CD4-positive, alpha-beta T cell (primary cell): ENCODE measurements at regions of chr2 and their contacts with region 1.

Region 1: GRCh38 chr2:134668821-134669220 is 50.0 kb downstream of the TMEM163 start:
- DNase-seq: peak; percentile 61 to 93 (median 79)
- ATAC-seq: peak; percentile 72
- H3K4me3 ChIP-seq: no peak overlapping the region
- H3K4me3 Mint-ChIP-seq: peak overlapping the region; percentile 69
- H3K27ac ChIP-seq: peak overlapping the region in 1 of 2 donors; percentile 36
- H3K27ac Mint-ChIP-seq: peak overlapping the region; percentile 85
- H3K4me1 ChIP-seq: peaks cover 62% of the 10 kb centered on the region
- H3K4me1 Mint-ChIP-seq: peaks cover 86% of the 10 kb centered on the region
- H3K27me3 ChIP-seq: no peaks in the 10 kb centered on the region
- H3K27me3 Mint-ChIP-seq: peaks cover 4% of the 10 kb centered on the region
- CTCF ChIP-seq: no peak

Region 2: DNA sequence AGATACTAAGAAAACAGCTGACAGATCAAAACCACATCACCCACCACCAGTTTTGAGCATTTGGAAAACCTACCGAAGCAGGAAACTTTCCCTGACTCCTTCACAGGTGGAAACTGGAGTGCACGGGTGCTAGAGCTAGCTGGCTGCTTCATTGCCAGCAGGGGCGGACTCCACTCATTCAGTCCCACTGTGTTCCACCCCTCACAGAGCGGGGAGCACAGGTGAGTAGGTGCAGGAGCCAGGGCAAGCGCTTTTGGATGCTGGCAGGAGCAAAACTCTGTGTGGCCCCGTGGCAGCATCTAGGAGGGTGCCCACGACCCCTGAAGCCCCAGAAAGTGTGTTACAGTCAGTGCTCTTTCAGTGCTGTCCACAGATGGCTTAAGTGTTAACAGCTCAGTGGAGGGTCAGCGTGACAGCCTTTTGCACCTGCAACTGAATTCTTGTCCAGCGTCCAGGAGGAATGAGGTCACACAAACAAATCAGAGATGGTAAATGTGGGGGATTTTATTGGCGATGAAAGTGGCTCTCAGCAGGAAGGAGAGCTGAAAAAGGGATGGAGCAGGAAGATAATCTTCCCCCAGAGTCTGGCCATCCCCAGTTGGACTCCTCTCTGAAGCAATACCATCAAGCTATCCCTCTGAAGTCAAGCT is 21.1 kb before region 1 on chr2:
- CTCF ChIA-PET with region 1: no interaction called
- POLR2A ChIA-PET with region 1: interaction called, 3 read pairs
- intact Hi-C with region 1: loop called in 1 of 2 experiments (anchors 2 kb)
- DNase-seq: no peak
- ATAC-seq: no peak
- H3K4me3 ChIP-seq: no peak overlapping the region
- H3K4me3 Mint-ChIP-seq: no peak overlapping the region
- H3K27ac ChIP-seq: no peak overlapping the region
- H3K27ac Mint-ChIP-seq: no peak overlapping the region
- H3K4me1 ChIP-seq: no peaks in the 10 kb centered on the region
- H3K4me1 Mint-ChIP-seq: no peaks in the 10 kb centered on the region
- H3K27me3 ChIP-seq: peaks cover 0 to 2% of the 10 kb centered on the region in 2 experiments
- H3K27me3 Mint-ChIP-seq: no peaks in the 10 kb centered on the region
- CTCF ChIP-seq: no peak

Region 3: DNA sequence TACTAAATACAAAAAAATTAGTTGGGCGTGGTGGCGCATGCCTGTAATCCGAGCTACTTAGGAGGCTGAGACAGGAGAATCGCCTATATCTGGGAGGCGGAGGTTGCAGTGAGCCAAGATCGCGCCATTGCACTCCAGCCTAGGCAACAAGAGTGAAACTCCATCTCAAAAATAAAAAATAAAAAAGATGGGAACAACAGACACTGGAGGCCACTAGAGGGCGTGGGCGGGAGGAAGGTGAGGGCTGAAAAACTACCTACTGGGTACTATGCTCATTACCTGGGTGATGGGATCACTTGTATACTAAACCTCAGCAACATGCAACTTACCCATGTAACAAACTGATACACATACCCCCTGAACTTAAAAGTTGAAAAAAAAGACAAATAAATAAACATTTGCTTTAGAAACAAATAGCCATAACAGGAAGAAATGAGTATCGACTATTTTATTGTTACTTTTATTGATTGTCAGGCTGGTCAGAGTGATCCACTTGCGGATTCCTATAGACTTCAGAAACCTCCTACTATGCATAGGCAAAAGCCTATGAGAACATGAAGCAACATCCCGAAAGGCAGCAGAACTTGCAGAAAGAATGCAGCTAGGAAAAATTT is 11.1 kb before region 1 on chr2:
- CTCF ChIA-PET with region 1: interaction called, 5 read pairs
- POLR2A ChIA-PET with region 1: interaction called, 16 read pairs
- intact Hi-C with region 1: no loop called
- DNase-seq: peak in 4 of 14 experiments; percentile 36 to 60 (median 53)
- ATAC-seq: no peak
- H3K4me3 ChIP-seq: no peak overlapping the region
- H3K4me3 Mint-ChIP-seq: no peak overlapping the region
- H3K27ac ChIP-seq: no peak overlapping the region
- H3K27ac Mint-ChIP-seq: no peak overlapping the region
- H3K4me1 ChIP-seq: peaks cover 3% of the 10 kb centered on the region
- H3K4me1 Mint-ChIP-seq: peaks cover 38% of the 10 kb centered on the region
- H3K27me3 ChIP-seq: no peaks in the 10 kb centered on the region
- H3K27me3 Mint-ChIP-seq: no peaks in the 10 kb centered on the region
- CTCF ChIP-seq: peak; percentile 49

Region 4: GRCh38 chr2:134679745-134680144 is 10.9 kb after region 1 on chr2:
- CTCF ChIA-PET with region 1: interaction called, 4 read pairs
- POLR2A ChIA-PET with region 1: interaction called, 47 read pairs
- intact Hi-C with region 1: loop called in 1 of 2 experiments (anchors 1 kb)
- DNase-seq: peak in 10 of 14 experiments; percentile 19 to 78 (median 49)
- ATAC-seq: peak; percentile 97
- H3K4me3 ChIP-seq: peak overlapping the region; percentile 13
- H3K4me3 Mint-ChIP-seq: peak overlapping the region; percentile 54
- H3K27ac ChIP-seq: no peak overlapping the region
- H3K27ac Mint-ChIP-seq: no peak overlapping the region
- H3K4me1 ChIP-seq: peaks cover 37% of the 10 kb centered on the region
- H3K4me1 Mint-ChIP-seq: peaks cover 60% of the 10 kb centered on the region
- H3K27me3 ChIP-seq: no peaks in the 10 kb centered on the region
- H3K27me3 Mint-ChIP-seq: no peaks in the 10 kb centered on the region
- CTCF ChIP-seq: no peak

Region 5: DNA sequence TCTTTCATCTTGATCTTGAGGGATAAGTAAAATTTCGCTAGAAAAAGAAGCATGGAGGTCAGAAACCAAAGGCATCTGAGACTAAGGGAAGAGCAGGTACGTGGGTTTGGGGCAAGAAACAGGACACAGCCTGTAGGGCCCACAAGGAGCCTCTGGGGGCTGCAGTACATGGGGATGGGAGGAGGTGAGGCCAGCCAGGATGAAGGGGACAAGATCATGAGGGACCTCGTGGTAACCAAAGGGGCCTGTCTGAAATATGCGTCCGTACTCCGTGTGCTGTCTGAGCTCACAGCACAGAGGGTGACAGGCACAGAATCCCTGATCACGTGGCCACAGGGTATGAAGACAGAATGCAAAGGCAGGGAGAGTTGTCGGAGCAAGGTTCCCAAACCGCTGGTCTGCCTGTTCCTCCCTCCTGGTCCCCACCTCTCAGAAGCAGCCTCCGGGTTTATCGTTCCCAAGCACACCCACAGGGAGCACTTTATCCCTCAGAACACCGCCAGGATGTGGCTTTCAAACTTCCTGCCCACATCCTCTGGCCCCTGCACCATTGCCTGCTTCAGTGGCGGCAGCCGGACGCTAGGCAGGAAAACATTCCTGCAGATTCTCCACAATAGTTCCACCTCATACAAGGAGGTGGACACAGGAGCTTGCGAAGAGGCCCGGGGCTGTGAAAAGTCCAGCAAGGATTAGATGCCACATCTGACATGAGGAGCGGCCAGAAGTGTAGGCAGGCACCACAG is 37.9 kb after region 1 on chr2:
- CTCF ChIA-PET with region 1: no interaction called
- POLR2A ChIA-PET with region 1: no interaction called
- intact Hi-C with region 1: loop called in 1 of 2 experiments (anchors 5 kb)
- DNase-seq: peak in 3 of 14 experiments; percentile 23 to 33 (median 24)
- ATAC-seq: peak; percentile 66
- H3K4me3 ChIP-seq: peak overlapping the region; percentile 15
- H3K4me3 Mint-ChIP-seq: peak overlapping the region; percentile 75
- H3K27ac ChIP-seq: no peak overlapping the region
- H3K27ac Mint-ChIP-seq: no peak overlapping the region
- H3K4me1 ChIP-seq: peaks cover 17% of the 10 kb centered on the region
- H3K4me1 Mint-ChIP-seq: peaks cover 23% of the 10 kb centered on the region
- H3K27me3 ChIP-seq: peaks cover 0 to 21% of the 10 kb centered on the region in 2 experiments
- H3K27me3 Mint-ChIP-seq: peaks cover 59% of the 10 kb centered on the region
- CTCF ChIP-seq: no peak

Region 6: DNA sequence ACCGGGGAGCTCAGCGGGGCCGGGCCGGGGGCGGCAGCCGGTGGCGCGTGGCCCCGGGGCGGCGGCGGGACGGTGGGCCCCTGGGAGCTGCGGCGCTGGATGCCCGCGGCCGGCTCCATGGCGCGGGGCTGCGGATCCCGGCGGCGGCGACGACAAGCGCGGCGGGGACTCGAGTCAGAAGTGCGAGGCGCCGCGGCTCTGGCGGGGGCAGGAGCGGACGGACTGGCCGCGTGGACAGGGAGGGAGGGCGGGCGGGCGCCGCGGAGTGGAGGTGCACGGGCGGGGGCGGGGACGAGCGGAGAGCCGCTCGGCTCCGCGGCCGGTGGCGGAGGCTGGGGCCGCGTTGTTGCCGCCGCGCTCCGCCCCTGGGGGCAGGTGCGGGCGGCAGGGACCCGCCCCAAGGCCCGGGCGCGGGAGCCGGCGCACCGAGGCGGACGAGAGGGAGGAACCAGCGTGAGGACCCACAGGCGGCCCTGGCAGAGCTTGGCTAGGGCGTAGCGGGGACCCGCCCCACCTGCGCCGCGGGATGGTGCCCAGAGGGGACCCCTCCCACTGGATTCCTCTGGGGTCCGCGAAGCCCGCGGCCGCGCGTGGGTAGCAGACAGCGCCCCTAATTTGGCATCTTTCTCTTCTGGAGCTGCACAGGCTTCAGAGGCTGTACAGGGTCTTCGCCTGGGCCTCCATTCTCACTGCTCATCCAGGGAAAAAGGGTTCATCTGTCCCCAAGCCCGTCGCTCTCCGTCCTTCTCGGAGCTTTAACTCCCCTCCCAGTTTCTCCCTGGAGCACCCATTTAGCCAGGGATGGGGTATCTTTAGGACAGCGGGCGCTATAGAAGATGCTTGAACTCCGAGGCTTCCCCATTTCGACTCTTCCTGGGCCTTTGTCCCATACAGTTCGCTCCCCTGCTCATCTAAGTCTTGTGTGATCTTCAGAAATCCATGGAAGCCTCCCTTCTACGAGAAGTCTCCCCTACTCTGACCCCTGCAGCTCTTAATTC is 50.3 kb after region 1 on chr2 and contains the start of gene TMEM163:
- CTCF ChIA-PET with region 1: no interaction called
- POLR2A ChIA-PET with region 1: interaction called, 5 read pairs
- intact Hi-C with region 1: loop called in 1 of 2 experiments (anchors 5 kb)
- DNase-seq: peak in 5 of 14 experiments; percentile 23 to 66 (median 36)
- ATAC-seq: peak; percentile 70
- H3K4me3 ChIP-seq: peak within 1 kb of the TSS; percentile 45
- H3K4me3 Mint-ChIP-seq: peak within 1 kb of the TSS; percentile 76
- H3K27ac ChIP-seq: no peak within 1 kb of the TSS
- H3K27ac Mint-ChIP-seq: no peak within 1 kb of the TSS
- H3K4me1 ChIP-seq: peaks cover 14% of the 10 kb centered on the region
- H3K4me1 Mint-ChIP-seq: peaks cover 33% of the 10 kb centered on the region
- H3K27me3 ChIP-seq: peaks cover 37 to 54% of the 10 kb centered on the region in 2 experiments
- H3K27me3 Mint-ChIP-seq: peaks cover 75% of the 10 kb centered on the region
- CTCF ChIP-seq: no peak
- total RNA-seq, gene TMEM163: 0.14 to 0.47 TPM

Region 7: GRCh38 chr2:134918526-134919340 is 249.9 kb after region 1 on chr2 and contains the start of gene CCNT2:
- CTCF ChIA-PET with region 1: no interaction called
- POLR2A ChIA-PET with region 1: interaction called, 12 read pairs
- intact Hi-C with region 1: loop called in 1 of 2 experiments (anchors 1 kb)
- DNase-seq: peak; percentile 98 to 100 (median 99)
- ATAC-seq: peak; percentile 82
- H3K4me3 ChIP-seq: peak within 1 kb of the TSS; percentile 88
- H3K4me3 Mint-ChIP-seq: peak within 1 kb of the TSS; percentile 92
- H3K27ac ChIP-seq: peak within 1 kb of the TSS; percentile 95 to 96
- H3K27ac Mint-ChIP-seq: peak within 1 kb of the TSS; percentile 92
- H3K4me1 ChIP-seq: peaks cover 25% of the 10 kb centered on the region
- H3K4me1 Mint-ChIP-seq: peaks cover 57% of the 10 kb centered on the region
- H3K27me3 ChIP-seq: no peaks in the 10 kb centered on the region
- H3K27me3 Mint-ChIP-seq: no peaks in the 10 kb centered on the region
- CTCF ChIP-seq: no peak
- total RNA-seq, gene CCNT2: 62.1 to 67.5 TPM